ENCODE measurements at regions of chr17 and their contacts with region 1.

Region 1: GRCh38 chr17:46940621-46941404 is 17.9 kb downstream of the GOSR2 start:
- DNase-seq: peak; percentile 75
- H3K4me3 Mint-ChIP-seq: no peak overlapping the region
- H3K27ac Mint-ChIP-seq: no peak overlapping the region
- H3K4me1 Mint-ChIP-seq: peaks cover 10% of the 10 kb centered on the region
- H3K27me3 Mint-ChIP-seq: no peaks in the 10 kb centered on the region

Region 2: DNA sequence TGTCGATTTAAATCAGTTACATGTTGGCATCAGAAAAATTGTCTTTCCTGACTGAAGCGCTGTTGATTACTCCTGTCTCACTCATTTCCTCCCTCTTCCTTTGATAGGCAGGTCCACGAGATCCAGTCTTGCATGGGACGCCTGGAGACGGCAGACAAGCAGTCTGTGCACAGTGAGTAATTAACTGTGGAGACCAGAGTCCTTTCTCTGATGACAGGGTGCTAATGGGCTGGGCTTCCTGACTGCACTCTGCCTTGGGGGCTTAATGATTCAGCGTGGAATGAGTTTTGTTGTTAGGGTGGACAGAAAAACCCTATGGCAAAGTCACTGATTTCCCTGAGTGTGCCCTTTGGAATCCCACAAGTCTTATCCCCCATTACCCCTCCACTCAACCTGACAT is 11.4 kb before region 1 on chr17:
- CTCF ChIA-PET with region 1: interaction called, 10 read pairs
- POLR2A ChIA-PET with region 1: no interaction called
- DNase-seq: no peak
- H3K4me3 Mint-ChIP-seq: no peak overlapping the region
- H3K27ac Mint-ChIP-seq: no peak overlapping the region
- H3K4me1 Mint-ChIP-seq: peaks cover 46% of the 10 kb centered on the region
- H3K27me3 Mint-ChIP-seq: no peaks in the 10 kb centered on the region

Region 3: DNA sequence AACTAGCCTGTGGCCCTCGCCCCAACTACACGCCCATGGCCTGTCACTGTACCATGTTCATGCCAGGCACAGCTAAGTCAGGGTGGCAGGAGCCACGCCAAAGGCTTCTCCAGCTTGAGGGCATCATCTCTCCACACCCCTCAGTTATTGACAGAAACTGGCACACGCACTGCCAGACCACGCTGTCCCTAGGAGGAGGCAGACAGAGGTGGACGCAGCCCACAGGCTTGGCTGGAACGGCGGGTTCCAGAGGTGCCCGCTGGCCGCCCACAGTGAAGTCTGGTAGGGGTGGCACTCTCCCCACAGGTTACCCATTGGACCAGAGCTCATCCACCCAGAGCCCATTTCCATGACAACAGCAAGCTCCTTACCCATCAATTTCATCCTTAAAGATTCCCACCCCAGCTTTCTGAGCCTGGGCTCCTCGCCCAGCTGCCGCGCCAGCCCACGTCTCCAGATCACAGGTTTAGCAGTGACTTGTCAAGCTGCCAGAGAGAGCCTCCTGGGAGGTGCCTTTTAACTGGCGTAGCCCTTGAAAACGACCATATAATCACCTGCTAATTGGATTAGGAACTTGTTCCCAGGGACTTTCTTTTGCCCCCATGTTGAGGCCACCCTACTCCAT is 10.3 kb after region 1 on chr17:
- CTCF ChIA-PET with region 1: interaction called, 13 read pairs
- POLR2A ChIA-PET with region 1: interaction called, 3 read pairs
- DNase-seq: no peak
- H3K4me3 Mint-ChIP-seq: no peak overlapping the region
- H3K27ac Mint-ChIP-seq: no peak overlapping the region
- H3K4me1 Mint-ChIP-seq: no peaks in the 10 kb centered on the region
- H3K27me3 Mint-ChIP-seq: no peaks in the 10 kb centered on the region

Measured in activated CD4-positive, alpha-beta memory T cell treated with anti-CD3 and anti-CD28 coated beads, Interleukin-2, amount 10 ng/mL, durations not matched to agents 7 days and 5 days (primary cell).